ENCODE measurements at regions of chr11 and their contacts with region 1.

Region 1: DNA sequence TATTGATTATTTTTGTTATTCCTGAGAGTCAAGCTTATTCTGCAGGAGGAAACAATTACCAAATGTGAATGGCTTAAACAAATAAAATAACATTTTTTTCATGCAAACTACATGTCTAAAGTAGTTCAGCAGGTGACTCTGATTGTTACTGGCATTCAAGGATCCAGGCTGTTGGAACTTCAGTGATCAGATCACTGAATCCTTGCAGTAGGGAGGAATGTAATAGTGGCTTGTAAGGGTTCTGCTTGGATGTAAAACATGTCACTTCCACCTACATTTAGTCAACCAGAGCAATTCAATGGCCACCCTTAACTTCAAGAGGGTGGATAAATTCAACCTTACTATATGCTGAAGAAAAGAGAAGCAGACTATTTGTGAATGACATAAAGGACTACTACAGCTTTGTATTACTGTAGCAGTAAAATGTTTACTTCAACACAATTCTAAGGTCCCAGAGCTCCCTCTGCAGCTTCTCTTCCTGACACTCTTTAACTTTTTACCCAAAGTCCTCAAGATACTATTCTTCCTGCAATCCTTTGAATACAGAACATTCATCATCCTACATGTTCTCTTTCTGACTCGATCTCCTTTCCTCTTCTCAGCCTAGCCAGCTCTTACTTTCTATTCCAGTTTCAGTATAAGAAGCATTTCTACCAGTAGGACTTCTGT is 284.0 kb downstream of the LRRC4C start:
- DNase-seq: no peak
- ATAC-seq: no peak

Region 2: GRCh38 chr11:42299780-42300179 is 1124.3 kb after region 1 on chr11:
- intact Hi-C with region 1: loop called (anchors 5 kb)
- DNase-seq: no peak
- ATAC-seq: no peak